Activated CD4-positive, alpha-beta T cell treated with anti-CD3 and anti-CD28 coated beads, Interleukin-2, amount 10 ng/mL, durations not matched to agents 24 days and 14 days (primary cell): ENCODE measurements at regions of chr4 and their contacts with region 1.

Region 1: DNA sequence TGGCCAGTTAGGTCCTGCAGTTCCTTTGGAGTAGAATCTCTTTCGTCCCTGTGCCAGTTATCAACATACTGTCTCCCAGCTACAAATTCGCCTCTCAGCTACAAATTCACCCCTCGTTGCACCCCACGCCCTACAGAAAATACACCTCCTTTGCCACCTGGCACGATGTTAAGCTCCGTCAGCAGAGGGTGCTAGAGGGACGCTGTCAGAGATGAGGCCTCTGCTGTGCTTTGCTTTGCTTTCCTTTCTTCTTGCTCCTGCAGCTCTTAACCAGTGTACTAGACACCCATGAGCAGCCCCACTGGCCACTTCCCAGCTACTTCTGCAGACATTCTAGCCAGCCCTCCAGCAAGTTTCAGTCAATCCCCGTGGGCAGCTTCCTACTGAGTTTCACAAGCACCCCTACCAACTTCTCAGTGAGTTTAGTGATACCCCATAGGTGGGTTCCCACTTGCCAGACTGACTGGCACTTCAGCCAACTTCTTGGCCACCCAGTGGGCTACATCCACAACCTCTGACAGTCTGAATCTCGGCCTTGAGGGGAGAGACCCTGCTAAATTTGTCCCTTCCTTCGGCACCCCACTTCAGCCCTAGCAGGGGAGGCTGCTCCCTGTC is 21.8 kb downstream of the HAUS3 start:
- DNase-seq: peak; percentile 94
- H3K4me3 Mint-ChIP-seq: no peak overlapping the region
- H3K27ac Mint-ChIP-seq: no peak overlapping the region
- H3K4me1 Mint-ChIP-seq: peaks cover 8% of the 10 kb centered on the region
- H3K27me3 Mint-ChIP-seq: no peaks in the 10 kb centered on the region

Region 2: GRCh38 chr4:2281575-2282343 is 61.6 kb after region 1 on chr4:
- intact Hi-C with region 1: no loop called
- DNase-seq: peak; percentile 93
- H3K4me3 Mint-ChIP-seq: peak overlapping the region; percentile 78
- H3K27ac Mint-ChIP-seq: peak overlapping the region; percentile 94
- H3K4me1 Mint-ChIP-seq: peaks cover 26% of the 10 kb centered on the region
- H3K27me3 Mint-ChIP-seq: no peaks in the 10 kb centered on the region

Region 3: DNA sequence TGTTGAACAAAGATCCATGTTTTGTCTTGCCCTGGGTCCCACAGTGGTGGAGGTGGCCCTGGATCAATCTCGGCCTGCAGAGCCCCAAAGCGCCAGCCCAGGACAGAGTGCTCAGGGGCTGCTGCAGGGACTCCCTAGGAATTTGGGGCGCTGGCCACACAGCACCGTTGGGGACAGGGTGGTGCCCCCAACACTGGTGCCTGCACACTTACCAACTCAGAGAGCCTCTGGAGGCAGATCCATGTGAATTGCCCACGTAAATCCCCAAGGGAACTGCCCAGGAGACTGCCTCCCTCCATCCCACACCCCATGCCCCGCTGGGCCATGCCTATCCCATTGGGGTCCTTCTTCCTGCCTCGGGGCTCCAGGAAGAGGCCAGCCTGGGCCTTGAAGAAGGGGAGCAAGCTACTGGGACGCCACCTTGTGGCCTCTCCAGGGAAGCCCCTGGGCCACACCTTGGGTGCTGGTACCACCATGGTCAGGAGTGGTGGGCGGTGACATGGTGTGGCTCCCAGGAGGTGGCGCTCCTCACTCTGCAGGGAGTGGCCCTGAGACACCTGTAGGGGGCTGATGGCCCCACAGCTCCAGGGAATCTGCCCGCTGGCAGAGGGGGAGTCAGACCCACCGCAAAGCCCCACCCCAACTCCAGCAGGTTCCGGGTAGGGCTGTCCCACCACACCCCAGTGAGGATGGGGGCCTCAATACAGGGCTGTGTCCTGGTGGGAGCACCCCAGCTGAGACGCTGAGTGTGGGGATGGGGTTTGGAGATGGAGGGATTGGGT is 221.5 kb after region 1 on chr4:
- intact Hi-C with region 1: loop called (anchors 1 kb)
- DNase-seq: peak; percentile 91
- H3K4me3 Mint-ChIP-seq: no peak overlapping the region
- H3K27ac Mint-ChIP-seq: peak overlapping the region; percentile 60
- H3K4me1 Mint-ChIP-seq: peaks cover 2% of the 10 kb centered on the region
- H3K27me3 Mint-ChIP-seq: no peaks in the 10 kb centered on the region

Region 4: GRCh38 chr4:2451821-2452785 is 232.0 kb after region 1 on chr4:
- intact Hi-C with region 1: no loop called
- DNase-seq: no peak
- H3K4me3 Mint-ChIP-seq: no peak overlapping the region
- H3K27ac Mint-ChIP-seq: no peak overlapping the region
- H3K4me1 Mint-ChIP-seq: no peaks in the 10 kb centered on the region
- H3K27me3 Mint-ChIP-seq: no peaks in the 10 kb centered on the region

Region 5: DNA sequence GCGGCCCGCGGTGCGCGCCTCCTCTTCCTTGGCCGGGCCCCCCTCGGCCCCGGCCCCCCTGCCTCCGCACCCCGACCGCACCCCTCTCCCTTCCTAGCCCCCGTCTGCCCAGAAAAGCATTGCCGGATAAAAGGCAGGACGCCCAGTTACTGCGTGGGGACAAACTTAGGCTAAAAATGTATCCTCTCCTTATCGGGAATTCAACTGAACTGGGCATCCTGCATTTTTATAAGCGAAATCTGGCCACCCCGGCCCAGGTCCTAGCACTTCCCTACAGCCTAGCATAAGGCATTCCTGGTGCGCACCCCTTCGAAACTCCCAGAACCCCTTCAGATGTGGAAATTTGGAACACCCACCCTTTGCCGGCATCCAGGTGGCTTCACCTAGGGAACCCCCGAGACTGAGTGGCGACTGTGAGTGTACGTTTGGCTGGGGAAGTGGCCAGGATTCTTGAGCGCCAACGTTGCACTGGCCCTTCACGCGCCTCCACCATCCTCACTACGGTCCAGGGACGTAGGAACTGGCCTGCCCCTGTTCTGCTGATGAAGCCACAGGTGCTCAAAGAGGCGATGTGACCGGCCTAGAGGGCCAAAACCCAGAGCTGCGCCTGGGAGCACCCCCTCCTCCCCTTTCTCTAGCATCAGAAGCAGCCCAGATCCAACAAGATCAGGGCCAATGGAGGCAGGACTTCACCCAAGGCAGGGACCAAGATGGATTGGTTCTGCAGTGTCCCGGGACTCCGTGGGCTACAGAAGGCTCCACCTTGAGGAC is 243.1 kb after region 1 on chr4:
- intact Hi-C with region 1: loop called (anchors 1 kb)
- DNase-seq: no peak
- H3K4me3 Mint-ChIP-seq: peak overlapping the region; percentile 77
- H3K27ac Mint-ChIP-seq: no peak overlapping the region
- H3K4me1 Mint-ChIP-seq: peaks cover 14% of the 10 kb centered on the region
- H3K27me3 Mint-ChIP-seq: peaks cover 17% of the 10 kb centered on the region

Region 6: DNA sequence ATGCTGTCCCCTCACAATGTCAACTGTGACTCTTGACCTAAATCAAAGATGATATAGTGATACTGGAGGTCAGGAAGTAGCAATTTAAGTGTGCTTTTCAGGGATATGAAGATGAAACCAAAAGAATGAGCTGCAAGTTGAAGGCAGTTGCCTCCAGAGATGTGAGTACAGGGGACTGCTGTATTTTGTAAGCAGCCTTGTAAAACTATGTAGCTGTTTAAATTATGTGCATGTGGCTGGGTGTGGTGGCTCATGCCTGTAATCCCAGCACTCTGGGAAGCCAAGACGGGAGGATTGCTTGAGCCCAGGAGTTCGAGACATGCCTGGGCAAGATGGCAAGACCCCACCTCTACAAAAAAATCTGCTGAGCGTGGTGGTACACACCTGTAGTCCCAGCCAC is 551.1 kb after region 1 on chr4:
- intact Hi-C with region 1: no loop called
- DNase-seq: no peak
- H3K4me3 Mint-ChIP-seq: no peak overlapping the region
- H3K27ac Mint-ChIP-seq: no peak overlapping the region
- H3K4me1 Mint-ChIP-seq: peaks cover 9% of the 10 kb centered on the region
- H3K27me3 Mint-ChIP-seq: no peaks in the 10 kb centered on the region